ENCODE measurements at regions of chr15 and their contacts with region 1.

Region 1: DNA sequence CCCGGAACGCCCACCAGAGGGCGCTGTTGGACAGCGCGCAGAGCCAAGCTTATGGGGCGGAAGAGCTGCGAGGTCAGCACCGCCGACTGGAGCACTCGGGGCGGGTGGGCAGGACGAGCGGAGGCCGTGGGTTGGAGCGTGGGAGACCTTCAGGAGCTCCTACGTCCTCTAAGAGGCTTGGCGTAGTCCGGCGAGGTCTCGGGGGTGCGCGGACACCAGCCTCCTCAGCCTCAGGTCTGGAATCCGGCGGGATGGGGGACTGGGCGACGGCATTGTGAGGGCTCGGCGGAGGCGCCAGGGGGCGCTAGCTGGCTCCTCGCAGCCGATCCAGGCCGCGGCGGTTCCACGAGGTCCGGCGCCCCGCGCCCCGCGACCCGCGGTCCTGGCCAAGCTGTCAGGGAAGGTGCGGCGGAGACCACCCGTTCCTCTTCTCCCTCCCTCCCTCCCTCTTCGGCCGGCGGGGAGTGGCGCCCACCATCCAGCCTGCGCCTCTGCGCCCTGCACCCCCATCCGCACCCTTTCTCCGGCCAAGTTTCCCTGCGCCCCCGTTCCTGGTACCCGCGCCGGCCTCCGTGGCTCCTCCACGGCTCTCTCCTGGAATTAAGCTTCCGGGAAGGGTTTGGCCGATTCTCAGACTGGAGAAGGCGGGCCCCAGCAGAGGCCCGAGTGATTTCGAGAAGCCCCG is 24.3 kb upstream of the POLG start:
- DNase-seq: peak; percentile 86 to 90 (median 90)
- ATAC-seq: peak; percentile 94
- H3K4me3 ChIP-seq: peak overlapping the region; percentile 50
- H3K27ac ChIP-seq: no peak overlapping the region
- H3K4me1 ChIP-seq: peaks cover 0 to 41% of the 10 kb centered on the region in 2 experiments; a peak in 2 of 5 replicates
- H3K27me3 ChIP-seq: peaks cover 51 to 88% of the 10 kb centered on the region in 2 experiments
- CTCF ChIP-seq: peak; percentile 77 to 93 (median 89)
- EP300 ChIP-seq: no peak
- POLR2A ChIP-seq: no peak
- RAD21 ChIP-seq: peak; percentile 92 to 93

Region 2: DNA sequence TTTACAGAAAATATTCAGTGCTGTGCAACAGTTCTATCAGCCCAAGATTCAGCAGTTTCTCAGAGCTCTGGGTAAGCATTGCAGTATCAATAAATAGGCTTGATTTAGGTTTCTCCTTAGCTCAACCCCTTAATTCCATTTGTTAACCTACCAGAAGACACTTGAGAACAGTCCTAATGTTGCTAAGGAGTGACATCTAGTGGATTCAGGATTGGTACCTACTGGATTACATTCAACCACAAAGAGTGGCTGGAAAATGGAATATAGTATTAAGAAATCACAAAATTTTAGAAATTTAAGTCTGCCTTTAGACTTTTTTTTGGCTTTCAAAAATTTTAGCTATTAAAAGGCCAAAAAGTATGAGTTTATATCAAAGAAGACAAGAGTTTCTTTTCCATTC is 59.0 kb before region 1 on chr15:
- CTCF ChIA-PET with region 1: no interaction called
- POLR2A ChIA-PET with region 1: no interaction called
- in situ Hi-C with region 1: no loop called
- intact Hi-C with region 1: no loop called
- DNase-seq: no peak
- ATAC-seq: peak; percentile 64
- H3K4me3 ChIP-seq: no peak overlapping the region
- H3K27ac ChIP-seq: no peak overlapping the region
- H3K4me1 ChIP-seq: no peaks in the 10 kb centered on the region; a peak in 1 of 5 replicates
- H3K27me3 ChIP-seq: no peaks in the 10 kb centered on the region
- CTCF ChIP-seq: peak in 1 of 3 experiments; percentile 26; a peak in 2 of 6 replicates
- EP300 ChIP-seq: no peak
- POLR2A ChIP-seq: no peak
- RAD21 ChIP-seq: 0 out of 4 replicates have a peak, but pooled peaks of 1 of the 2 experiments have one; percentile 33

Region 3: DNA sequence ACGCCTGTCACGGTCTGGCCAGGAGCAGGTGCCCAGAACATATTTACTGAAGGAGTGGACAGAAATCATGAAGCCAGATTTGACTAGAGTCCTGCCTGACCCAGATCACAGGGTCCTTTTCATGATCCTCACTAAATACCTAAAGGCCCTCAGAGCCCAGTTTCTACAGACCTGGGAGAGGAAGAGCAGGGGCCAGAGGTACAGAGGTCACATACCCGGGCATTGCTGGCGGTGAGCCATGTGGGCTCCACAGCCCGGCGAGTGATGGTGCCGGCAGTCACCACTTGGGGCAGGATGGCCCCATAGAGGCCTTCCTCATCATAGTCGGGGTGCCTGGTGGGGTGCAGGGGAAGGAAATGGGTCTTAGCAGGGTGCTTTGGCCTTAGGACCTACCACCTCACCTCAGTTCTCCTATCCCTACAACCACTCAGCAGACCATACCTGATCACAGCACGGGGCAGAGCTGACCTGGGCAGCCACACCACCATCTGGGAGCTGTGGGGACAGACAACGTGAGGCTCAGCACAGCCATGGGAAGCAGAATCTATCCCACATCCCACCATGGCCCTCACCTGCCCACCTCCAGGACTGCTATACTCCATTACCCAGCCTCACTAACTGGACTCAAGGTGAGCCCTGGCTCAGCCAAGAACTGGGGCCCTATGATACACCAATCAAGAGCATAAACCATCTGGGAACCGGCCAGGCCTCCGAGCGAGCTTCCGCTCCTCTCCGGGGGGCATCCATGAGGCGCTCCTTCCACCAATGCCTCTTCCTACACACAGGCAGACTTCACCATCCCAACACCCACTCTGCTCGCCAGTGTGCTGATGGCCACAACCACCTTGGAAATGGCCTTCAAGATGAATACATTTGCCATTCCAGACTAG is 37.1 kb before region 1 on chr15:
- CTCF ChIA-PET with region 1: no interaction called
- POLR2A ChIA-PET with region 1: no interaction called
- in situ Hi-C with region 1: no loop called
- intact Hi-C with region 1: no loop called
- DNase-seq: no peak
- ATAC-seq: no peak; the same call in 2 of the 3 replicates
- H3K4me3 ChIP-seq: no peak overlapping the region
- H3K27ac ChIP-seq: no peak overlapping the region; the same call in 2 of the 3 replicates
- H3K4me1 ChIP-seq: peaks cover 0 to 3% of the 10 kb centered on the region in 2 experiments; a peak in 1 of 5 replicates
- H3K27me3 ChIP-seq: no peaks in the 10 kb centered on the region
- CTCF ChIP-seq: no peak
- EP300 ChIP-seq: no peak
- POLR2A ChIP-seq: 0 out of 2 replicates have a peak, but pooled peaks have one; percentile 12
- RAD21 ChIP-seq: no peak

Region 4: GRCh38 chr15:89334510-89335288 is 24.2 kb before region 1 on chr15 and contains the start of gene POLG:
- CTCF ChIA-PET with region 1: interaction called, 3 read pairs
- POLR2A ChIA-PET with region 1: no interaction called
- in situ Hi-C with region 1: no loop called
- intact Hi-C with region 1: loop called (anchors 2 kb)
- DNase-seq: peak; percentile 96 to 98 (median 97)
- ATAC-seq: peak; percentile 96
- H3K4me3 ChIP-seq: peak within 1 kb of the TSS; percentile 88
- H3K27ac ChIP-seq: peak within 1 kb of the TSS; percentile 85
- H3K4me1 ChIP-seq: peaks cover 13 to 30% of the 10 kb centered on the region in 2 experiments; a peak in 4 of 5 replicates
- H3K27me3 ChIP-seq: peaks cover 0 to 3% of the 10 kb centered on the region in 2 experiments; a peak in 1 of 5 replicates
- CTCF ChIP-seq: peak in 1 of 3 experiments; percentile 6; a peak in 1 of 6 replicates
- EP300 ChIP-seq: peak; percentile 84
- POLR2A ChIP-seq: peak; percentile 98
- RAD21 ChIP-seq: no peak
- polyA plus RNA-seq, gene POLG: 15.2 to 20.8 TPM

Region 5: GRCh38 chr15:89399238-89400120 is 40.6 kb after region 1 on chr15:
- CTCF ChIA-PET with region 1: interaction called, 15 read pairs
- POLR2A ChIA-PET with region 1: no interaction called
- in situ Hi-C with region 1: no loop called
- intact Hi-C with region 1: loop called (anchors 2 kb)
- DNase-seq: peak; percentile 79 to 89 (median 86)
- ATAC-seq: peak; percentile 94
- H3K4me3 ChIP-seq: peak overlapping the region; percentile 42
- H3K27ac ChIP-seq: no peak overlapping the region
- H3K4me1 ChIP-seq: peaks cover 0 to 16% of the 10 kb centered on the region in 2 experiments; a peak in 3 of 5 replicates
- H3K27me3 ChIP-seq: peaks cover 3 to 32% of the 10 kb centered on the region in 2 experiments; a peak in 4 of 5 replicates
- CTCF ChIP-seq: peak; percentile 73 to 91 (median 77)
- EP300 ChIP-seq: no peak
- POLR2A ChIP-seq: no peak
- RAD21 ChIP-seq: peak; percentile 26 to 58

Region 6: GRCh38 chr15:89406940-89407607 is 48.2 kb after region 1 on chr15:
- CTCF ChIA-PET with region 1: no interaction called
- POLR2A ChIA-PET with region 1: no interaction called
- in situ Hi-C with region 1: loop called (anchors 5 kb)
- intact Hi-C with region 1: no loop called
- DNase-seq: no peak
- ATAC-seq: no peak
- H3K4me3 ChIP-seq: no peak overlapping the region
- H3K27ac ChIP-seq: no peak overlapping the region
- H3K4me1 ChIP-seq: peaks cover 0 to 34% of the 10 kb centered on the region in 2 experiments; a peak in 2 of 5 replicates
- H3K27me3 ChIP-seq: peaks cover 55 to 75% of the 10 kb centered on the region in 2 experiments
- CTCF ChIP-seq: no peak
- EP300 ChIP-seq: no peak
- POLR2A ChIP-seq: no peak
- RAD21 ChIP-seq: no peak

Region 7: DNA sequence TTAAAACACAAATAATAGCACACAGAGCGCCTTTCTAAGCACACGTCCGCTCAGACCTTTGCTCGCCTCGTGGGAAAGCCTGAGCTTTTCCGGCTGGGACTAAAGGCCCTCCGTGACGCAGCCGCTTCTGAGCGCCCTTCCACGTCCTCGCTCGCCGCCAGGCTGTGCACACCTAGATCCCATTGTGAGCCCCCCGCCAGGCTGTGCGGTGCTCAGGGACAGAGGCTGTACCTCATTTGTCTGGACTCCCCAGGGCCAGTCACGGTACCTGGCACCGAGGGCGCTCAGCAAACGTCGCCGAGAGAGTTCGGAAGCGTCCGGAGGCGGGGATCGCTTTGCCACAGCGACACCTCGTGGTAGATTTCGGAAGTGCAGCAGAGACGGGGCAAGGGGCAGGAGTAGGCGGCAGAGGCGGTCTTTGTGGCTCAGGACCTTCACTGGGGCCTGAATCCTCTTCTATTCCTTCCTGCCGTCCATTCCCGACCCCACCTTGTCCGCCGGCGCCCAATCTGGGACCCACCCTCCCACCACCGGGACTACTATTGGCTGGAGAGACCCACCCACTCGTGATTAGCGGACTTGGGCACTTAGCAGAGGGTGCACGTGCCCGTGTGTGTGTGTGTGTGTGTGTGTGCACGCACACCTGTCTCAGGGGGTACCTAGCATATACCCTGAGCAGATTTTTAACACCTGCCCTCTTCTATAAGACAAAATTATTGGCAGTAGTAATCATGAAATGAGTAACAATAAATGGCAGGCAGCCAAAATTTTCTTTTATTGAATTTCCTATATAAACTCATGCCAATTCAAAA is 71.8 kb after region 1 on chr15:
- CTCF ChIA-PET with region 1: interaction called, 65 read pairs
- POLR2A ChIA-PET with region 1: interaction called, 4 read pairs
- in situ Hi-C with region 1: no loop called
- intact Hi-C with region 1: loop called (anchors 1 kb)
- DNase-seq: peak; percentile 84 to 92 (median 88)
- ATAC-seq: peak; percentile 99
- H3K4me3 ChIP-seq: peak overlapping the region; percentile 17
- H3K27ac ChIP-seq: no peak overlapping the region
- H3K4me1 ChIP-seq: peaks cover 0 to 7% of the 10 kb centered on the region in 2 experiments; a peak in 2 of 5 replicates
- H3K27me3 ChIP-seq: peaks cover 3 to 26% of the 10 kb centered on the region in 2 experiments; a peak in 3 of 5 replicates
- CTCF ChIP-seq: peak; percentile 94 to 97 (median 95)
- EP300 ChIP-seq: no peak
- POLR2A ChIP-seq: no peak
- RAD21 ChIP-seq: peak; percentile 77 to 87

Region 8: GRCh38 chr15:89457097-89457496 is 98.2 kb after region 1 on chr15:
- CTCF ChIA-PET with region 1: no interaction called
- POLR2A ChIA-PET with region 1: no interaction called
- in situ Hi-C with region 1: no loop called
- intact Hi-C with region 1: no loop called
- DNase-seq: peak; percentile 49 to 77 (median 74)
- ATAC-seq: peak; percentile 95
- H3K4me3 ChIP-seq: no peak overlapping the region
- H3K27ac ChIP-seq: no peak overlapping the region
- H3K4me1 ChIP-seq: no peaks in the 10 kb centered on the region
- H3K27me3 ChIP-seq: no peaks in the 10 kb centered on the region; a peak in 1 of 5 replicates
- CTCF ChIP-seq: no peak
- EP300 ChIP-seq: no peak
- POLR2A ChIP-seq: no peak
- RAD21 ChIP-seq: no peak

Region 9: DNA sequence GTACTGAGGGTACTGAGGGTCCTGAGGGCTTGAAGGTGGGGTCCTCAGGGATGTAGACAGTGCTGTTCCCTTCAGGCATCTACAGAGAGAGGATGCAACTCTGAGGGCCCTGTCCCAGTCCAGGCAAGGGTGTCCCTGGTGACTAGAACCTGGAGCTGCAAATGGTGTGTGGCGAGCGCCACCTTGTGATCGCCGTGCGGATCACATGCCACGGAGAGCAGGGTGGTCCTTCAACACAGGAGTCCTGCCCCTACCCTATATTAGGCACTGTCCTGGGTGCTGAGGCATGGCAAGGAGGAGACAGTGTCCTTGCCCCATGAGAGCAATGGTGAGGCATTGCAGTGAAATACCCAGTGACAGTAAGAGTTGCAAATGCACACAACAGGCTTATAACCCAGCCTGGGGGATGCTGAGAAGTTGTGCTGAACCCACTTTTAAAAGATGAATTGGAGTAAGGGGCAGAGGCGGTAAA is 113.9 kb after region 1 on chr15:
- CTCF ChIA-PET with region 1: interaction called, 20 read pairs
- POLR2A ChIA-PET with region 1: no interaction called
- in situ Hi-C with region 1: no loop called
- intact Hi-C with region 1: loop called (anchors 1 kb)
- DNase-seq: peak; percentile 72 to 84 (median 78)
- ATAC-seq: peak; percentile 99
- H3K4me3 ChIP-seq: no peak overlapping the region
- H3K27ac ChIP-seq: no peak overlapping the region
- H3K4me1 ChIP-seq: no peaks in the 10 kb centered on the region
- H3K27me3 ChIP-seq: peaks cover 6 to 36% of the 10 kb centered on the region in 2 experiments; a peak in 4 of 5 replicates
- CTCF ChIP-seq: peak; percentile 93 to 96 (median 94)
- EP300 ChIP-seq: no peak
- POLR2A ChIP-seq: no peak
- RAD21 ChIP-seq: peak; percentile 70 to 90

Region 10: DNA sequence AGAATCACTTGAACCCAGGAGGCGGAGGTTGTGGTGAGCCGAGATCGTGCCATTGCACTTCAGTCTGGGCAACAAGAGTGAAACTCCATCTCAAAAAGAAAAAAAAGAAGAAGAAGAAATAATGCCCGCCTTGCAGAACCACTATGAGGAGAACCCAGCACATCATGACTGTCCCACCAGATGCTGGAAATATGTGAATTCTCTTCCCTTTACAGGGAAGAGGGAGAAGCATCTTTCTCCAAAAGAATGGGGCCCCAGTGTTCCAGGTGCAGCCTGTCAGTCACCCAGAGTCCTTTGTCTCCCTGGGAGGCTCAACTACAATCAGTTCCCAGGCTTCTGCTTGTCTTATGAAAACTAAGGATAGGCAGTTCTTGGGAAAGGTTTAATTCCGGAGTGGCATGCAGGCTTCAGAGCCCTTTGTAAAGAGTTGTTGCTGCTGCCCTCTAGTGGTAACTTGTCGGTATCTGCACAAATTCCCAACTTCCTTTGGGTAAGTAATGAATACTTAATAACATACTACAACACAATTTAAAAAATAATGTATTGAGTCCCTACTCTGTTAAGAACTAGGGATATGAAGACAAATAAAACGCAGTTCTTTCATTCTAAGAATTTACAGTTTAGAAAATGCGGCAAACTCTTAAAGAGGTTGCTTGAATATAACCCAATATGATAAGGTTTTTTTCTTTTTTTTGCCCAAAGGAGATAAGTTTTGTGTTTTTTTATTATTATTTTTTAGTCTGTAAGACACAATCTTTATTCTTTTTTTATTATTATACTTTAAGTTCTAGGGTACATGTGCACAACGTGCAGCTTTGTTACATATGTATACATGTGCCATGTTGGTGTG is 197.7 kb after region 1 on chr15:
- CTCF ChIA-PET with region 1: no interaction called
- POLR2A ChIA-PET with region 1: no interaction called
- in situ Hi-C with region 1: no loop called
- intact Hi-C with region 1: loop called (anchors 10 kb)
- DNase-seq: peak; percentile 57 to 74 (median 68)
- ATAC-seq: peak; percentile 84
- H3K4me3 ChIP-seq: no peak overlapping the region
- H3K27ac ChIP-seq: no peak overlapping the region
- H3K4me1 ChIP-seq: peaks cover 0 to 7% of the 10 kb centered on the region in 2 experiments; a peak in 2 of 5 replicates
- H3K27me3 ChIP-seq: peaks cover 10 to 35% of the 10 kb centered on the region in 2 experiments; a peak in 3 of 5 replicates
- CTCF ChIP-seq: peak; percentile 72 to 87 (median 73)
- EP300 ChIP-seq: no peak
- POLR2A ChIP-seq: no peak
- RAD21 ChIP-seq: peak in 1 of 2 experiments; percentile 67; a peak in 3 of 4 replicates